ENCODE measurements at regions of chr11 and their contacts with region 1.

Region 1: GRCh38 chr11:113974741-113975470 is at the start of gene HTR3A:
- DNase-seq: no peak
- H3K4me3 ChIP-seq: no peak within 1 kb of the TSS
- H3K27ac ChIP-seq: no peak within 1 kb of the TSS
- H3K4me1 ChIP-seq: peaks cover 36% of the 10 kb centered on the region
- CTCF ChIP-seq: no peak
- total RNA-seq, gene HTR3A: not detected in 2 replicates

Region 2: DNA sequence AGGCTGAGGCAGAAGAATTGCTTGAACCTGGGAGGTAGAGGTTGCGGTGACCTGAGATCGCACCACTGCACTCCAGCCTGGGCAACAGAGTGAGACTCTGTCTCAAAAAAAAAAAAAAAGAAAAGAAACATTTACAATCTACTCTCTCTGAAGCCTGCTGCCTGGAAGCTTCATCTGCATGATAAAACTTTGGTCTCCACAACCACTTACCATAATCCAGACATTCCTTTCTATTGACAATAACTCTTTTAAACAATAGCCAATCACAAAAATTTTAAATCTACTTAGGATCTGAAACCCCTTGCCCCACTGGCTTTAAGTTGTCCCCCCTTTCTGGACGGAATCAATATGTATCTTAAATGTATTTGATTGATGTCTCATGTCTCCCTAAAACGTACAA is 25.0 kb before region 1 on chr11:
- CTCF ChIA-PET with region 1: no interaction called
- POLR2A ChIA-PET with region 1: interaction called, 3 read pairs
- intact Hi-C with region 1: loop called (anchors 1 kb)
- DNase-seq: no peak
- H3K4me3 ChIP-seq: no peak overlapping the region
- H3K27ac ChIP-seq: no peak overlapping the region
- H3K4me1 ChIP-seq: peaks cover 8% of the 10 kb centered on the region
- CTCF ChIP-seq: no peak

Region 3: DNA sequence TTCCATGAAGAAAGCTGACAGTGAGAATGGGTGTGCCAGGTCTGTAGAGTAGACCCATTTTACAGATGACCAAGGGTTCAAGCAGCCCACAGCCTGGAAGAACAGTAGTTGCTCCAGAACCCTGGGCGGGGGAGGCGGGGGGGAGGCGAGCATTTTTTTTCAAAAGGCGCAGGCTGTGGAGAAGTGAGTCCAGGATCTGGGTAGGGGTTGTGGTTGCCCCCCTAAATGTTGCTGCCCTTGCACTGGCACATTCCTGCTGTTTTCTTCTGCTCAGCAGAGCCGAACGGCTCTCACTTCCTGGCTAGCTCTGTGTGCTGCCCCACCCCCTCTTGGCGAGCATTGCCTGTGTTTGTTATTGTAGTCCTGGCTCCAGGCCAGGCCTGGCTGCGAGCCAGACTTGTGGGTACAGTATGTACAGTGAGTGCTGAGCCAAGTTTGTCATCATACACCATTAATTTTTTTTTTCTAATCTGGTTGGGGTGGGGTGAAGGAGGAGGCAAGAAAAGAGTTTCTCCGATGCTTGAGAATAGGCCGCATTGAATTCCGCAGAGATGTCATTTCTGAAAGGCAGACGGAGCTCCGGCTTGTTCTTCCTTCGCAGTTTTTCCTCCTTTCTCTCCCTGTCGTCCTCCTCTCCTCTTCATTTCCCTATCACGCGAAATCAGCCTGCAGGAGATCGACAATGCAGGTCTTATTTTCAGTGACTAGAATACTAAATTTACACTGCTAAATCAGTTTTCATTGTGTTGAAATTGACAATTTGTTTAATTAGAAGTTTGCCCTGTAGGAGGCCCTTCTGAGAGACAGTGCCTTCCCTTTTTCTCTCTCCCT is 185.1 kb after region 1 on chr11:
- CTCF ChIA-PET with region 1: no interaction called
- POLR2A ChIA-PET with region 1: no interaction called
- intact Hi-C with region 1: loop called (anchors 2 kb)
- DNase-seq: peak; percentile 98
- H3K4me3 ChIP-seq: peak overlapping the region; percentile 43
- H3K27ac ChIP-seq: peak overlapping the region; percentile 81
- H3K4me1 ChIP-seq: peaks cover 59% of the 10 kb centered on the region
- CTCF ChIP-seq: peak; percentile 48; the same call in 1 of the 2 replicates

Measured in OCI-LY7 (cell line).